ENCODE measurements at regions of chr5 and their contacts with region 1.

Region 1: DNA sequence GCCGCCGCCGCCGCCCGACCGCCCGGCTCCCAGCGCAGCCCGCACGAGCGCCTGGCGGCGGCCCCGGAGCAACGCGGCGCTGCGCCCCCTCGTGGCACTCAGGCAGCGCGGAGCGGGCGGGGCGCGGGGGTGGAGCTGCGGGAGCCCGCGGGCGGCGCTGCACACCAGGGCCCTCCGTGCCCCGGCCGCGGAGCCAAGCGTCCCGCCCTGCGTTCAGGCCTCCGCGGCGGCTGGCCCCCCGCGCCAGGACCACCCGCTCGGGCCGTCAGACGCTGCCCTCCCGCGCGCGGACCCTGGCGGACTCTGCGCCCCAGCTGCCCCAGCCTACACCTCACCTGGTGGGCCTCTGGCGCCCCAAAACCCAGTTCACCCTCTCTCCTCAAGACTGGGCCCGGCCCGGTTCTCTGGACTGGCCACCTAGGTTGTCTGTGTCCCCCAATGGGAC is at the start of gene RASGEF1C:
- DNase-seq: peak; percentile 92
- H3K4me3 Mint-ChIP-seq: peak within 1 kb of the TSS; percentile 44
- H3K27ac Mint-ChIP-seq: no peak within 1 kb of the TSS
- H3K4me1 Mint-ChIP-seq: peaks cover 4% of the 10 kb centered on the region
- H3K27me3 Mint-ChIP-seq: peaks cover 21% of the 10 kb centered on the region
- total RNA-seq, gene RASGEF1C: not detected in 2 replicates

Region 2: GRCh38 chr5:180047667-180048066 is 161.5 kb before region 1 on chr5:
- intact Hi-C with region 1: no loop called
- DNase-seq: no peak
- H3K4me3 Mint-ChIP-seq: no peak overlapping the region
- H3K27ac Mint-ChIP-seq: no peak overlapping the region
- H3K4me1 Mint-ChIP-seq: no peaks in the 10 kb centered on the region
- H3K27me3 Mint-ChIP-seq: no peaks in the 10 kb centered on the region

Region 3: DNA sequence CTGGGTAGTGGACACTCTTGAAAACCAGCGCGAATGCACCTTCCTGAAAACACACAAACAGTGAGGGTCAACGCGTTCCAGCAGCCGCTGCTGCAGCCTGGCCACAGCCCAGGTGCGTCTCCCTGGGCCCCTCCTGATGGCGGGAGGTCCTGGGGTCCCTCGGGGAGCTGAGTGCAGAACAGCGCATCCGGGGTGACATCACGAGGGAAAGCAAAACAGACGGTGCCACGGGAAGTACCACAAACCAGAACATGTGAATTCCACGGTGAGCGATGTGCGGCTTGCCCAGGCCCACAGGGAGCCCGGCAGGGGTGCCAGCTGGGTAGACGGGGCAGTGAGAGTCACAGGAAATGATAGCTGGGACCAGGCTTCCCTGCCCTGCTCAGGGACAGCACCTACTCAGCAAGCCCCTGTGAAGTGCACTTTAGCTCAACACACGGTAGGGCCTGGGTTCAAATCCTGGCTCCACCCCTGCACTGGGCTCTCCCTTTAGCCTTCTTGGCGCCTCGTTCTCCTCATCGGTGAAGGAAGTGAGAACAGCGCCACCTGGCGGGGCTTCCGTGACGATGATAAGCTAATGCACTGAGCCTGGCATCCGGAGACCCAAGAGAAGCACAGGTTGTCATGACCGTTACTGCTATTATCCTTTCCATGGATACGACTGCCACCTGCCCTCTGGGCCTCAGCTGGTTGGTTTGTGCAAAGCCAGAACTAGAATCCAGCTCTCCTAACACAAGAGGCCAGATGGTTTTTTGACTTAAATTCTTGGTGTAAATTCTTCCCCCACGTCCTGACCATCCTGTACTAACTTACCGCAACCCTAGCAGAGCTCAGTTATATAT is 119.4 kb after region 1 on chr5:
- intact Hi-C with region 1: loop called (anchors 10 kb)
- DNase-seq: peak; percentile 93
- H3K4me3 Mint-ChIP-seq: no peak overlapping the region
- H3K27ac Mint-ChIP-seq: no peak overlapping the region
- H3K4me1 Mint-ChIP-seq: no peaks in the 10 kb centered on the region
- H3K27me3 Mint-ChIP-seq: peaks cover 12% of the 10 kb centered on the region

Measured in activated CD4-positive, alpha-beta T cell treated with anti-CD3 and anti-CD28 coated beads, Interleukin-2, amount 10 ng/mL, durations not matched to agents 24 days and 14 days (primary cell).